ENCODE measurements at regions of chr12 and their contacts with region 1.

Region 1: GRCh38 chr12:2583091-2583497 is 211.7 kb upstream of the FKBP4 start:
- DNase-seq: peak; percentile 70
- H3K4me3 ChIP-seq: peak overlapping the region in 1 of 4 donors; percentile 14
- H3K27ac ChIP-seq: peak overlapping the region in 3 of 4 donors; percentile 15 to 56 (median 47)
- H3K4me1 ChIP-seq: peaks cover 5 to 31% (median 19%) of the 10 kb centered on the region in 4 donors
- H3K27me3 ChIP-seq: no peaks in the 10 kb centered on the region
- CTCF ChIP-seq: peak; percentile 74 to 92 (median 91)
- EP300 ChIP-seq: no peak
- POLR2A ChIP-seq: no peak

Region 2: GRCh38 chr12:1795785-1796514 is 787.1 kb before region 1 on chr12:
- in situ Hi-C with region 1: no loop called
- intact Hi-C with region 1: loop called (anchors 10 kb)
- DNase-seq: peak; percentile 96
- H3K4me3 ChIP-seq: peak overlapping the region; percentile 55 to 72 (median 62)
- H3K27ac ChIP-seq: peak overlapping the region; percentile 87 to 90 (median 88)
- H3K4me1 ChIP-seq: peaks cover 10 to 25% (median 16%) of the 10 kb centered on the region in 4 donors
- H3K27me3 ChIP-seq: no peaks in the 10 kb centered on the region
- CTCF ChIP-seq: peak; percentile 72 to 99 (median 95)
- EP300 ChIP-seq: no peak
- POLR2A ChIP-seq: peak; percentile 82

Region 3: DNA sequence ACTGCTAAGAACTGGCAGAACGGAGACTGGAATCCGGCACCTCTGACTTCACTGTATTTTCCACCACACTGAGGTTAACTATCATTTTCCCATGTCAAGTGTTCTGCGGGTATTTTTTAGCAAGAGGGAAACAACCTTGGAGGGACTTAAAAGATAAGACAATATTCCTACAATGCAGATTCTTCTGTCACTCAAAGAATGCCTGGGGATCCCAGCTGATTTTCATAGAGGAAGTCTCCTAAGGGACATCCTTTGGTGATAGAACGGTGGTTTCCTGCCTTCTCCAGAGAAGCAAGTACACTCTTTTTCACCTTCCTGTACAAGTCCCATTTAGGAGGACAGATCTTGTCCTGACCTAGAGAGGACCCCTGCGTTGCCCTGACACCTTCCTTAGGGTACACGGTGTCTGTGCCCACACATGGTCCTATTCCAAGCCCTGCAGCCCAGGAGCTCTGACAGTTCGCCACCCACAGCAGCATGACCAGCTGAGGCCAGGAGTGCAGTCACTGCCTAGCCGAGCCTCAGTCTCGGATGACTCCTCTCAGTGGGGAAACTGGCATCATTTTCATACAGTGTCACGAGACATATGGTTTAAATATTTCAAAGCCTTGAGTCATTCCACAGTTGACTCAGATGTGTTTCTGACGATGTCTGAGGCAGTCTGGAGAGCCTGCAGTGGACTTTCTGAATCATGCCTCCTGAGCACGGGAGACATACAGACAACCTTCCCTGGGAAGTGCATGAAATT is 30.4 kb after region 1 on chr12:
- in situ Hi-C with region 1: no loop called
- intact Hi-C with region 1: no loop called
- DNase-seq: no peak
- H3K4me3 ChIP-seq: no peak overlapping the region
- H3K27ac ChIP-seq: peak overlapping the region in 2 of 4 donors; percentile 18 to 26
- H3K4me1 ChIP-seq: no peaks in the 10 kb centered on the region
- H3K27me3 ChIP-seq: no peaks in the 10 kb centered on the region
- CTCF ChIP-seq: no peak
- EP300 ChIP-seq: no peak
- POLR2A ChIP-seq: no peak

Measured in transverse colon (tissue), 4 donors.